Sigmoid colon (tissue), 7 donors: ENCODE measurements at regions of chr6 and their contacts with region 1.

Region 1: GRCh38 chr6:56268266-56268665 is 20.9 kb upstream of the COL21A1 start:
- DNase-seq: no peak
- H3K4me3 ChIP-seq: no peak overlapping the region
- H3K27ac ChIP-seq: no peak overlapping the region
- H3K4me1 ChIP-seq: peaks cover 0 to 26% (median 10%) of the 10 kb centered on the region in 4 donors
- H3K27me3 ChIP-seq: no peaks in the 10 kb centered on the region
- CTCF ChIP-seq: no peak
- EP300 ChIP-seq: no peak
- POLR2A ChIP-seq: no peak

Region 2: DNA sequence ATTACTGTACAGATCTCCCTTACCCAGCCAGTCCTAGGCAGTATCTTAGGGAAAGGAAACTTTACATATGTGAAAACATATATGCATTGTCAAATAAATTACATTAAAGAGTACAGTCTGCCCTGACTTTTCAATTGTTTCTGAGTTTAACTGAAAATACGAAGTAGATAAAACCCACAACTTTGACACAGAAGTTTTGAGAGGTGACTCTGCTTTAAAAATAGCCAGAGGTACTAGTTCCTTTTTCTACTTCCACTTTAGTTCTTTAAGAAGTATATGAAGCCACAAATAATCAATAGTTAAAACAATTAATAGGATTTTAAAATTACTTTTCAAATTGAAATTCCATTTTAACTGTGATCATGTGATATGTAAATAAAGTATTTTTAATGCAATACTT is 455.8 kb before region 1 on chr6:
- intact Hi-C with region 1: no loop called
- DNase-seq: no peak
- H3K4me3 ChIP-seq: no peak overlapping the region
- H3K27ac ChIP-seq: no peak overlapping the region
- H3K4me1 ChIP-seq: no peaks in the 10 kb centered on the region
- H3K27me3 ChIP-seq: no peaks in the 10 kb centered on the region
- CTCF ChIP-seq: no peak
- EP300 ChIP-seq: no peak
- POLR2A ChIP-seq: no peak

Region 3: GRCh38 chr6:56223995-56224394 is 44.3 kb before region 1 on chr6:
- intact Hi-C with region 1: loop called (anchors 5 kb)
- DNase-seq: no peak
- H3K4me3 ChIP-seq: no peak overlapping the region
- H3K27ac ChIP-seq: peak overlapping the region in 3 of 4 donors; percentile 32 to 59 (median 53)
- H3K4me1 ChIP-seq: peaks cover 0 to 58% (median 50%) of the 10 kb centered on the region in 4 donors
- H3K27me3 ChIP-seq: no peaks in the 10 kb centered on the region
- CTCF ChIP-seq: no peak
- EP300 ChIP-seq: peak in 1 of 4 donors; percentile 11
- POLR2A ChIP-seq: no peak